GM12878 (cell line): ENCODE measurements at regions of chr12 and their contacts with region 1.

Region 1: DNA sequence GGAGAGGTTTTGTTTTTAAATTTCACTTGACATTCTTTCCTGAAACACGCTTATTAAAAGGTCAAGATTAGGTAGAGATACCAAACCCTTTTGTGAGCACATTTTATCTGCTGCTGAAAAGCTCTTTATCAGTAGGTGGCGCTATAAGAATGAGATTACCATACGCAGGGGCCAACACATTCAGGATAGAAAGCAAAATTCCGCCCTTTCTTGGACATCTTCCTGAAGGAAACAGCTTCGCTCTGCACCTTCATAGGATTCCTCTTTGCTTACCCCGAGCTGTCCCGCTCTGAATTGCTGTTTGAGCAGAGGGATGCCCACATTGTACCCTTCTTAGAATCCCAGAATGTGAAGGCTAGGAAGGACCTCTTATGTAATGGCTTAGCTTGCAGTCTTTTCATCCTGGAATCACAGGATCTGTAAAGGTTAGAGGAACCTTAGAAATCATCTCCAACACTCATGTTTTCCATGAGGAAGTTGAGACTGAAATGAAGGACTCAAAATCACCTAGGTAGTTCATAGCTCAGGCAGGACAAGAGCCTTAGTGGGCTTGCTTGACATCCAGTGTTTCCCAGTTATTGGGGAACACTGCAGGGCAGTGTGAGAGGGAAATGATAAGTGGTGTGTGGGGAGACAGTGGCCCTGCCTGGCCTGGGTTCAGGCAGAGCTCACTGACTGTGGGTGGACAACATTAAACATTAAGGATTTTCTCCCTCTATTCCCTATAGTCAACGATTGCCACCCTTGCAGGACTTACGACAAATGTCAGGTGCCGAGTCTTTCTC is 38.7 kb upstream of the CRY1 start:
- DNase-seq: no peak
- ATAC-seq: peak; percentile 75
- H3K4me3 ChIP-seq: no peak overlapping the region
- H3K27ac ChIP-seq: no peak overlapping the region
- H3K4me1 ChIP-seq: no peaks in the 10 kb centered on the region
- H3K27me3 ChIP-seq: no peaks in the 10 kb centered on the region; a peak in 1 of 4 replicates
- CTCF ChIP-seq: peak; percentile 68 to 87 (median 81)
- EP300 ChIP-seq: no peak
- POLR2A ChIP-seq: no peak
- RAD21 ChIP-seq: peak; percentile 91

Region 2: DNA sequence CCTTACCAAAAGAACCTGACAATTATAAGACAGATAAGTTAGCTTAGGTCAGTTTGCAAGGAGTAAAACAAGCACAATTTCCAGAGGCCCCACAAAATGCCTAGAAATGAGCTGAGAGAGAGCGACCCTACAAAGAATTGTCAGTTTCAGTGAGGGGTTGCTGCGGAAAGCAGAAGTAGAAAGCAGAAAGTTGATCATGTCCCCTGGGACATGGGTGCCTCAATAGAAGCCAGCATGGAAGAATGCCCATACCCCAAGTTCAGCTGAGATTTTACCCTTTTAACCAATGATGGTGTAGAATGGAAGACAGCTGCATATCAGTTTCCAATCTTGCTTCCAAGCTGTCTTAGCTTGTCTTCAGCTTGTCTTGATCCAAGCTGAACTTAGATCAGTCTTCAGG is 16.9 kb before region 1 on chr12:
- CTCF ChIA-PET with region 1: interaction called, 13 read pairs
- POLR2A ChIA-PET with region 1: no interaction called
- RAD21 ChIA-PET with region 1: interaction called, 4 read pairs
- SMC1A ChIA-PET with region 1: interaction called, 4 read pairs
- in situ Hi-C with region 1: no loop called
- intact Hi-C with region 1: no loop called
- DNase-seq: no peak
- ATAC-seq: no peak
- H3K4me3 ChIP-seq: no peak overlapping the region
- H3K27ac ChIP-seq: no peak overlapping the region
- H3K4me1 ChIP-seq: no peaks in the 10 kb centered on the region
- H3K27me3 ChIP-seq: peaks cover 2 to 6% of the 10 kb centered on the region in 2 experiments; a peak in 2 of 4 replicates
- CTCF ChIP-seq: no peak
- EP300 ChIP-seq: no peak
- POLR2A ChIP-seq: no peak
- RAD21 ChIP-seq: no peak

Region 3: DNA sequence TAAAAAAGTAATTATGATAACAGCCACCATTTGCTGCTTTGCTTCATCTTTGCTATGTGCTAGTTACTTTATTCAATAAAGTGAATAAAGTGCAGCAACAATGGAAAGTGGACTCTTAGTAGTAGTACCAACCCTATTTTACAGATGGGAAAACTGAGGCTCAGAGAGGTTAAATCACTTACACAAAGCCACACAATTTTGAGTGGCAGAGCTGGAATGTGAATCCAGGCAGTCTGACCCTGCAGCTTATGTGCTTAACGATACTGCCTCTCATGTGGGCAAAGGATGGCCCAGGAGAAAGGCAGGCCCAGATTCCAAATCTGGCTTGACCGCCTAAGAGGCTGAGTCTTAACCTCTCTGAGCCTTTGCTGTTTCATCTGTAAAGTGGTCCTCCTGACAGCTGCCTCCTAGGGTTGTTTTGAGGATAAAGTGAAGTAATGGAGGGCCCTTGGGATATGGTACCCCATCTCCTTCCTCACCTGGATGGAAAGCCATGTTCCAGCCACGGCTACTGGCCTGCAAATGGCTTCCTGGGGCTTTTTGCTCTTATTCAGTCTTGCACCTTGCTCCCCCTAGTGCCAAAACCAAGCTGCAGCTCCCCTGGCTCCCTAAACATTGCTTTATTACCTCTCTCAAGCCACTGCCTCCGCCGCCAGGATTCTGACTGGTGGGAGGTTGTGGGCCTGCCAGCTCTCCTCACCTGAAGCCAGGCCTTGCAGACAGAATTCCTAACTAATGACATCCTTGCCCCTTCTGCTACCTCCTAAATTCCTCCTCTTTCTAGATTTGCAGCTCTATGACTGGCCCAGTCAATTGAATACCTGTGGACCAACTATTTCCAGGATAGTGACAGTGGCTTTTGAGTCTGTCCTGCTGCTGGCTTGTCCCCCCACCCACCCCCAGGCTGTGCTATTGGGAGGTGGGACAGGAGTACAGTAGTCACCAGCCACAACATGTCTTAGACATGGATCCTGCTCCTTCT is 270.3 kb after region 1 on chr12:
- CTCF ChIA-PET with region 1: interaction called, 188 read pairs
- POLR2A ChIA-PET with region 1: no interaction called
- RAD21 ChIA-PET with region 1: interaction called, 26 read pairs
- SMC1A ChIA-PET with region 1: interaction called, 30 read pairs
- in situ Hi-C with region 1: loop called (anchors 5 kb)
- intact Hi-C with region 1: loop called (anchors 1 kb)
- DNase-seq: no peak
- ATAC-seq: peak; percentile 95
- H3K4me3 ChIP-seq: no peak overlapping the region
- H3K27ac ChIP-seq: no peak overlapping the region
- H3K4me1 ChIP-seq: no peaks in the 10 kb centered on the region
- H3K27me3 ChIP-seq: no peaks in the 10 kb centered on the region
- CTCF ChIP-seq: peak; percentile 61 to 72 (median 68)
- EP300 ChIP-seq: no peak
- POLR2A ChIP-seq: no peak
- RAD21 ChIP-seq: peak; percentile 49

Region 4: GRCh38 chr12:107607464-107608392 is 475.7 kb after region 1 on chr12:
- CTCF ChIA-PET with region 1: interaction called, 219 read pairs
- POLR2A ChIA-PET with region 1: no interaction called
- RAD21 ChIA-PET with region 1: interaction called, 71 read pairs
- SMC1A ChIA-PET with region 1: interaction called, 94 read pairs
- in situ Hi-C with region 1: loop called (anchors 5 kb)
- intact Hi-C with region 1: loop called (anchors 1 kb)
- DNase-seq: peak; percentile 5
- ATAC-seq: peak; percentile 97
- H3K4me3 ChIP-seq: no peak overlapping the region
- H3K27ac ChIP-seq: no peak overlapping the region
- H3K4me1 ChIP-seq: no peaks in the 10 kb centered on the region
- H3K27me3 ChIP-seq: no peaks in the 10 kb centered on the region
- CTCF ChIP-seq: peak; percentile 92 to 95 (median 93)
- EP300 ChIP-seq: no peak
- POLR2A ChIP-seq: no peak
- RAD21 ChIP-seq: peak; percentile 93

Region 5: DNA sequence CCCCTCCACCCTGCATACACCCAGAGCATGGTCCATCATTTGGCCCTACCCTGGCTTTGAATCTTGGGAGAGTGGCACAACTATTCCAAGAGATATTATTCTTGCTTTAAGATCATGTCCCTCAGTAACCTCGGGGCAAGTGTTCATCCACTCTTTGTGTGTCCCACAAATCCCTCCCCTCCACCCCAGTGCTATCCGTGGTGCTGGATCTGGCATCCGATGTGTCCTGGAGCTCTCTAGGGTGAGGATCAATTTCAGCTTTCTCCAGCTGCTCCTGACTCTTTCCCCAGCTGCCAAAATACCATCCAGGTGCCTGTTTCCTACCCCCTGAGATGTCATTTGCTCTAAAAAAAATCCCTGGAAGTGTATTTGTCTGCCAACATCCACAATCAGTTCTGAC is 1271.9 kb after region 1 on chr12:
- CTCF ChIA-PET with region 1: no interaction called
- POLR2A ChIA-PET with region 1: no interaction called
- RAD21 ChIA-PET with region 1: no interaction called
- SMC1A ChIA-PET with region 1: no interaction called
- in situ Hi-C with region 1: loop called (anchors 25 kb)
- intact Hi-C with region 1: no loop called
- DNase-seq: no peak
- ATAC-seq: no peak
- H3K4me3 ChIP-seq: no peak overlapping the region
- H3K27ac ChIP-seq: no peak overlapping the region
- H3K4me1 ChIP-seq: no peaks in the 10 kb centered on the region
- H3K27me3 ChIP-seq: peaks cover 0 to 3% of the 10 kb centered on the region in 2 experiments; a peak in 3 of 4 replicates
- CTCF ChIP-seq: no peak
- EP300 ChIP-seq: no peak
- POLR2A ChIP-seq: no peak
- RAD21 ChIP-seq: no peak